Transverse colon (tissue), 4 donors: ENCODE measurements at regions of chr6 and their contacts with region 1.

Region 1: GRCh38 chr6:165543781-165544180 is 119.3 kb downstream of the PDE10A start:
- DNase-seq: no peak
- H3K4me3 ChIP-seq: no peak overlapping the region
- H3K27ac ChIP-seq: no peak overlapping the region
- H3K4me1 ChIP-seq: no peaks in the 10 kb centered on the region
- H3K27me3 ChIP-seq: no peaks in the 10 kb centered on the region
- CTCF ChIP-seq: no peak
- EP300 ChIP-seq: no peak
- POLR2A ChIP-seq: no peak

Region 2: DNA sequence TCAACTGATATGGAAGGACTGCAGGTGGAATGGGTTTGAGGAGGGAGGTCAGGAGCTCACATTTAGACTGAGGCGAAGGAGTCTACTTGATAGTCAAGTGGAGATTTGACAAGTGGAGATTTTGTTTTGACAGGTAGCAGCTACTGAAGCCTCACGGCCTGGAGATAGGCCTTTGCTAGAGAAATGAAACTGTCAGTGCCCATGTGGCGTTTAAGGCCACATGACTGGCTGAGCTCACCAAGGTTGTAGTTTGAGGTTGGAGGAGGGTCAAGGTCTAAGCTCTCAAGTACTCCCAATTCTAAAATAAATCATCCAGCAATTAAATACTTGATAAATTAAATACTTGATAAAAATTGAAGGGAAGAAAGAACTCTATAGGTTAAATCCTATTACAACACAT is 154.2 kb before region 1 on chr6:
- in situ Hi-C with region 1: no loop called
- intact Hi-C with region 1: no loop called
- DNase-seq: no peak
- H3K4me3 ChIP-seq: no peak overlapping the region
- H3K27ac ChIP-seq: no peak overlapping the region
- H3K4me1 ChIP-seq: no peaks in the 10 kb centered on the region
- H3K27me3 ChIP-seq: no peaks in the 10 kb centered on the region
- CTCF ChIP-seq: no peak
- EP300 ChIP-seq: no peak
- POLR2A ChIP-seq: no peak

Region 3: DNA sequence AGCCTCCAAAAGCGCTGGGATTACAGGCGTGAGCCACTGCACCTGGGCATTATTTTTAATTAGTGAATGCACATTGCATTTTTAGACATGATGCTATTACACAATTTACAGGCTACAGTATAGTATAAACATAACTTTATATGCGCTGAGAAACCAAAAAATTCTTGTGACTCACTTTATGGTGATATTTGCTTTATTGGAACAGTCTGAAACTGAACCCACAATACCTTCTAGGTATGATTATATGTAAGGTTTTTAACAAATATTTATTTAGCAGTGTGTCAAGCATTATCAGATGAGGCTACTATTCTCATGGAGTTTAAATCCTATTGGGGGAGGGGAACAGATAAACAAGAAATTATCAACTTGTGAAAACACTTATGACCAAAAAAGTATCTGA is 75.4 kb before region 1 on chr6:
- in situ Hi-C with region 1: no loop called
- intact Hi-C with region 1: no loop called
- DNase-seq: no peak
- H3K4me3 ChIP-seq: no peak overlapping the region
- H3K27ac ChIP-seq: no peak overlapping the region
- H3K4me1 ChIP-seq: no peaks in the 10 kb centered on the region
- H3K27me3 ChIP-seq: no peaks in the 10 kb centered on the region
- CTCF ChIP-seq: no peak
- EP300 ChIP-seq: no peak
- POLR2A ChIP-seq: no peak

Region 4: DNA sequence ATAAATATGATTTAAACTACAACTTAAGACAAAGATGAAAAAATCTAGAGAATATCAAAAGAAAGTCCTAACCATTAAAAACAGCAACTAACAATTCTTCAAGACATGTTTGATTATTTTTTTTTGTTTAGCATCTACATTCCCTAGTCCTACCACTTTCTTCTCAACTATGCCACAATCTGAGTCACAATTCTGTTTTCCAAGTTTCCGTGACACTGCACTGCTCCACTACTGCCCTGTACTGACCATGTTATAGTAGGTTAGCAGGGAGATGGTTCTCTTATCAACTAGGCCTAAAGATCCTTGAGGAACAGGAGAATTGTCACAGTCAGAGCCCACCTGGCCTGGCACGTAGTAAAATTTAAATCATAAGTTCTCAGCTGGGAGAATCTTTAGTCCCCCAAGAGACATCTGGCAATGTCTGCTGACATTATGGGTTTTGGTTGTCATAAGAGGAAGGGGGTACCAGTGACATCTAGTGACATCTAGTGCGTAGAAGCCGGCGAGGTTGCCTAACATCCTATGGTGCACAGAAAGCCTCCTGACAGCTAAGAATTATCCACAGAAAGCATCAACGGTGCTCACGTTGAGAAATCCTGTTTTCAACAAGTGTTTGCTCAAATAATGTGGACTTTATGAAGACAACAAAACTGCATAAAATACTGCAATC is 18.8 kb after region 1 on chr6:
- in situ Hi-C with region 1: no loop called
- intact Hi-C with region 1: loop called (anchors 1 kb)
- DNase-seq: no peak
- H3K4me3 ChIP-seq: no peak overlapping the region
- H3K27ac ChIP-seq: no peak overlapping the region
- H3K4me1 ChIP-seq: no peaks in the 10 kb centered on the region
- H3K27me3 ChIP-seq: no peaks in the 10 kb centered on the region
- CTCF ChIP-seq: no peak
- EP300 ChIP-seq: no peak
- POLR2A ChIP-seq: no peak

Region 5: GRCh38 chr6:165615636-165616035 is 71.9 kb after region 1 on chr6:
- in situ Hi-C with region 1: no loop called
- intact Hi-C with region 1: loop called (anchors 2 kb)
- DNase-seq: no peak
- H3K4me3 ChIP-seq: peak overlapping the region in 1 of 4 donors; percentile 3
- H3K27ac ChIP-seq: peak overlapping the region in 2 of 4 donors; percentile 8 to 45
- H3K4me1 ChIP-seq: no peaks in the 10 kb centered on the region
- H3K27me3 ChIP-seq: no peaks in the 10 kb centered on the region
- CTCF ChIP-seq: no peak
- EP300 ChIP-seq: no peak
- POLR2A ChIP-seq: no peak